Activated CD4-positive, alpha-beta memory T cell treated with anti-CD3 and anti-CD28 coated beads for 36 hours (primary cell): ENCODE measurements at regions of chr16 and their contacts with region 1.

Region 1: GRCh38 chr16:31354394-31355291 is at the start of gene ITGAX:
- DNase-seq: peak; percentile 93
- H3K4me3 Mint-ChIP-seq: peak within 1 kb of the TSS; percentile 65
- H3K27ac Mint-ChIP-seq: peak within 1 kb of the TSS; percentile 80
- H3K4me1 Mint-ChIP-seq: peaks cover 42% of the 10 kb centered on the region
- H3K27me3 Mint-ChIP-seq: peaks cover 8% of the 10 kb centered on the region
- total RNA-seq, gene ITGAX: 30.3 to 32.9 TPM

Region 2: DNA sequence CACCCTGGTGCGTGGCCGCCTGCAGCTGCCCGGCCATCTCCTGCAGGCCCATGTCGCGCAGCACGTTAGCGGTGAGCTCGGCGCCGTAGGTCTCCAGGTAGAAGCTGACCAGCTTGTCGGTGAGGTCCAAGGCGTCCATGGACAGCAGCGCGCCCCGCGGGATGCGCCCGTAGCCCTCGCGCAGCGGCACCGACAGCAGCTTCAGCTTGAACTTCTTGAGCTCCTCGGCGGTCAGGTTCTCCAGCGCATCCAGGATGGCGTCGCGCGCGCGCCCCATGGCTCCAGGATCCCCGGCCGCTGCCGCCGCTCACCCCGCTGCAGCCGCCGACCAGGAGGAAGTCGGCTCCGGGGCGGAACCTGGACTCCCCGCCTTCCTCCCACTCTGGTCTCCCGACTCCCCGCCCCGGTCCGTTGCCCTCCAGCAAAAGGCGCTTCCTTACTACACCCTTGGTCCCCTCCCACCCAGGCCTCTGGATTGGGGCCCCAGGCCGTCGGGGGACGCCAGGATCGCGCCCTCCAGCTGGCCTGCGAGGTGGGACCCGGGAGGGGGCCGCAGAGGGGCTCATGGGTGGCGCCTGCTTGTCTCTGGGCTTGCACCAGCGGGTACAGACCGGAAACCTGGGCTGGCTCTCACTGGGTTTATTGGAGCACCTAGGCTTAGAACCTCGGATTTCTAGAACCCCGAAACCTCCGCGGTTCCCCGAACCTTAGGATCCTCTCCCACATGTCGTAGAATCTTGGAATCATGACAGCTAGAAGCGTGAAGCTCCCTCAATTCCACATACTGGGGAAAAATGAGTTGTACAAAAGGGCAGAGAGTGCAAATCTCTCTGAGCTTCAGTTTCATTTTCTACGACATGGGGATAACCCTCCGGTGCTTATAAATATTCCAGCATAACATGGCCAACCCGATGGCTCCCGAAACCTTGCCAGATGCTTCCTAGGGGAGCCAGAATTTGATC is 151.9 kb before region 1 on chr16 and contains the start of gene PYCARD:
- CTCF ChIA-PET with region 1: no interaction called
- POLR2A ChIA-PET with region 1: no interaction called
- intact Hi-C with region 1: loop called (anchors 5 kb)
- DNase-seq: peak; percentile 49
- H3K4me3 Mint-ChIP-seq: peak within 1 kb of the TSS; percentile 78
- H3K27ac Mint-ChIP-seq: peak within 1 kb of the TSS; percentile 69
- H3K4me1 Mint-ChIP-seq: peaks cover 54% of the 10 kb centered on the region
- H3K27me3 Mint-ChIP-seq: no peaks in the 10 kb centered on the region
- total RNA-seq, gene PYCARD: 13.6 to 14.6 TPM

Region 3: GRCh38 chr16:31215287-31216162 is 139.1 kb before region 1 on chr16:
- CTCF ChIA-PET with region 1: no interaction called
- POLR2A ChIA-PET with region 1: no interaction called
- intact Hi-C with region 1: loop called (anchors 1 kb)
- DNase-seq: peak; percentile 32
- H3K4me3 Mint-ChIP-seq: peak overlapping the region; percentile 46
- H3K27ac Mint-ChIP-seq: no peak overlapping the region
- H3K4me1 Mint-ChIP-seq: peaks cover 21% of the 10 kb centered on the region
- H3K27me3 Mint-ChIP-seq: peaks cover 44% of the 10 kb centered on the region

Region 4: DNA sequence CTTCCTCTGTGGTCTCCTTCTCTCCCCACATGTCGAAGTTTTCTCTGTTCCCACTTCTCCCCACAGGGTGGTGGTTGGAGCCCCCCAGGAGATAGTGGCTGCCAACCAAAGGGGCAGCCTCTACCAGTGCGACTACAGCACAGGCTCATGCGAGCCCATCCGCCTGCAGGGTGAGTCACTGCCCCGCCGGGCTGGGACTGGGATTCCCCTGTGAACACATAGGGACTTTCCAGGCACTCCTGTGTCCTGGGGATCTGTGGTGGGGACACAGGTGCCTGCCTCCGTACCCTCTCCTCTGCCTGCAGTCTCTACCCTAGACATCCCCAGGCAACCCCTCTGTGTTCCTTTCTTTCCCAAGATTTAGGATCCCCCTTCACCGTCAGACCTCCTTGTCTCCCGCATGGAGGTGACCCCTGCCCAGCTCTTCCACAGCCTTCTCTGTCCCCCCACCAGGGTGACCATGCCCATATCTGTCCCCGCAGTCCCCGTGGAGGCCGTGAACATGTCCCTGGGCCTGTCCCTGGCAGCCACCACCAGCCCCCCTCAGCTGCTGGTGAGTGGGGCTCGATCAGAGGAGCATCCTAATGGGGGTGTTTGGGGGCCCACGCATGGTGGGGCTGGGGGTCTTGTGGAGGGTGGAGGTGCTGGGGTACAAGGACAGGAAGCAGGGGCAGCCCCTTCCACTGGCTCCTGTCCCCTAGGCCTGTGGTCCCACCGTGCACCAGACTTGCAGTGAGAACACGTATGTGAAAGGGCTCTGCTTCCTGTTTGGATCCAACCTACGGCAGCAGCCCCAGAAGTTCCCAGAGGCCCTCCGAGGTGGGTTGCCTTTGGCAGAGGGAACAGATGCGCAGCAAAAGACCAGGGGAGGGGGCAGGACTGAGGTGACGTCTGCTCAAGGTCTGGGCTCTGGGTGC is 89.1 kb before region 1 on chr16:
- CTCF ChIA-PET with region 1: no interaction called
- POLR2A ChIA-PET with region 1: no interaction called
- intact Hi-C with region 1: loop called (anchors 2 kb)
- DNase-seq: peak; percentile 91
- H3K4me3 Mint-ChIP-seq: peak overlapping the region; percentile 28
- H3K27ac Mint-ChIP-seq: peak overlapping the region; percentile 85
- H3K4me1 Mint-ChIP-seq: peaks cover 46% of the 10 kb centered on the region
- H3K27me3 Mint-ChIP-seq: peaks cover under 1% of the 10 kb centered on the region

Region 5: GRCh38 chr16:31382485-31383161 is 28.0 kb after region 1 on chr16:
- CTCF ChIA-PET with region 1: no interaction called
- POLR2A ChIA-PET with region 1: no interaction called
- intact Hi-C with region 1: loop called (anchors 1 kb)
- DNase-seq: peak; percentile 80
- H3K4me3 Mint-ChIP-seq: no peak overlapping the region
- H3K27ac Mint-ChIP-seq: no peak overlapping the region
- H3K4me1 Mint-ChIP-seq: peaks cover 22% of the 10 kb centered on the region
- H3K27me3 Mint-ChIP-seq: peaks cover 18% of the 10 kb centered on the region

Region 6: GRCh38 chr16:31421587-31421986 is 66.9 kb after region 1 on chr16:
- CTCF ChIA-PET with region 1: no interaction called
- POLR2A ChIA-PET with region 1: no interaction called
- intact Hi-C with region 1: loop called (anchors 2 kb)
- DNase-seq: peak; percentile 87
- H3K4me3 Mint-ChIP-seq: no peak overlapping the region
- H3K27ac Mint-ChIP-seq: no peak overlapping the region
- H3K4me1 Mint-ChIP-seq: peaks cover 25% of the 10 kb centered on the region
- H3K27me3 Mint-ChIP-seq: peaks cover 11% of the 10 kb centered on the region

Region 7: GRCh38 chr16:31873556-31874365 is 519.1 kb after region 1 on chr16 and contains the start of gene ZNF267:
- CTCF ChIA-PET with region 1: no interaction called
- POLR2A ChIA-PET with region 1: no interaction called
- intact Hi-C with region 1: loop called (anchors 2 kb)
- DNase-seq: peak; percentile 96
- H3K4me3 Mint-ChIP-seq: peak within 1 kb of the TSS; percentile 90
- H3K27ac Mint-ChIP-seq: peak within 1 kb of the TSS; percentile 99
- H3K4me1 Mint-ChIP-seq: peaks cover 69% of the 10 kb centered on the region
- H3K27me3 Mint-ChIP-seq: no peaks in the 10 kb centered on the region
- total RNA-seq, gene ZNF267: 72.1 to 76.4 TPM